Head of caudate nucleus (tissue), 42 donors: ENCODE measurements at regions of chr18 and their contacts with region 1.

Region 1: GRCh38 chr18:62531078-62531477 is 8.3 kb downstream of the ZCCHC2 start:
- DNase-seq: no peak

Region 2: GRCh38 chr18:62479574-62479973 is 51.5 kb before region 1 on chr18:
- intact Hi-C with region 1: no loop called
- DNase-seq: no peak

Region 3: GRCh38 chr18:62584241-62585120 is 53.4 kb after region 1 on chr18:
- intact Hi-C with region 1: loop called (anchors 5 kb)
- DNase-seq: peak; percentile 77 to 95 (median 89)

Region 4: GRCh38 chr18:62784966-62785413 is 253.9 kb after region 1 on chr18:
- intact Hi-C with region 1: no loop called
- DNase-seq: peak in 40 of 42 donors; percentile 10 to 89 (median 71)